ENCODE measurements at regions of chr6 and their contacts with region 1.

Region 1: DNA sequence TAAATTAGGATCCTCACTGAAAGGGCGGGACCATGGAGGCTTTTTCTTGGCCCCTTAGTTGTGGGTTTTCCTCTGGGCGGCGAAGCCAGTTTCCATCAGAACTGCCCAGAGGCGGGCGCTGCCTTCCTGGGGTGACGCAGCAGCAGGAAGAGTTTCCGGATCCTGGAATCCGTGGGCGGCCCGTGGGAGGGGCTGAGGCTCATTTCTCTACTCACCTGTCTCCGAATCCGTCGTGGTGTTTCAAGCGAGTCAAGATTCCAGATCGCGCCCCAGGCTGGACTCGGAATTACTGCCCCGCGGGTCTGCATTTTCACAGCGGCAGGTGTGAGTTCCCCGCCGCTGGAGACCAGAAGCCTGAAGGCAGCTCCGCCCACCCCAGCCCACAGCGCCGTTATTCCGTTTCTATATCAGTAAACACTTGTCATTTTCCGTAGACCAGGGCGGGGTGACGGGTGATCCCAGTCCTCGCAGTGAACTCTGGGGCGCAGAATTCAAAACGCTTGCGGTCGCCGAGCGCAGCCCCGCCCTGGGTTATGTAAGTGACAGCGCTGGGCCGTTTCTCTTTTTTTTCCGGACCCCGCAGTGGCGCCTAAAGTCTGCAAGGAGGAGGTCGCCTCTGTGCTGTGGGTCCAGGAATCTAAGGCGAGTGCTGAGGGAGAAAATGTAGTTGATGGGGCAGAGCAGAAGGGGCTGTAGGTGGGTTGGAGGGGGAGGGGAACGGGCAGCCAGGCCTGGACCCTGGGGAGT is 27.2 kb upstream of the POU5F1 start:
- DNase-seq: peak; percentile 90 to 95
- H3K4me3 ChIP-seq: peak overlapping the region; percentile 42 to 72 (median 63)
- H3K27ac ChIP-seq: peak overlapping the region; percentile 93 to 98 (median 95)
- H3K4me1 ChIP-seq: peaks cover 11 to 42% (median 36%) of the 10 kb centered on the region in 4 donors
- H3K27me3 ChIP-seq: no peaks in the 10 kb centered on the region
- CTCF ChIP-seq: no peak
- EP300 ChIP-seq: no peak
- POLR2A ChIP-seq: peak in 1 of 4 donors; percentile 12

Region 2: GRCh38 chr6:31139599-31139998 is 58.1 kb before region 1 on chr6:
- intact Hi-C with region 1: loop called (anchors 5 kb)
- DNase-seq: no peak
- H3K4me3 ChIP-seq: no peak overlapping the region
- H3K27ac ChIP-seq: no peak overlapping the region
- H3K4me1 ChIP-seq: peaks cover 10 to 32% (median 23%) of the 10 kb centered on the region in 4 donors
- H3K27me3 ChIP-seq: no peaks in the 10 kb centered on the region
- CTCF ChIP-seq: no peak
- EP300 ChIP-seq: no peak
- POLR2A ChIP-seq: no peak

Region 3: GRCh38 chr6:31366693-31367470 is 169.2 kb after region 1 on chr6:
- intact Hi-C with region 1: loop called (anchors 5 kb)
- DNase-seq: peak; percentile 86 to 96
- H3K4me3 ChIP-seq: peak overlapping the region; percentile 24 to 36 (median 32)
- H3K27ac ChIP-seq: no peak overlapping the region
- H3K4me1 ChIP-seq: peaks cover 0 to 9% (median 9%) of the 10 kb centered on the region in 4 donors
- H3K27me3 ChIP-seq: peaks cover 0 to 36% (median 0%) of the 10 kb centered on the region in 3 donors
- CTCF ChIP-seq: peak in 6 of 7 experiments; percentile 78 to 98 (median 93)
- EP300 ChIP-seq: no peak
- POLR2A ChIP-seq: no peak

Measured in stomach (tissue), 19 donors.